CD14-positive monocyte (primary cell): ENCODE measurements at regions of chr10 and their contacts with region 1.

Region 1: GRCh38 chr10:114024876-114025610 is 18.6 kb upstream of the ADRB1 start:
- DNase-seq: peak; percentile 84 to 97 (median 94)
- H3K4me3 ChIP-seq: peak overlapping the region in 2 of 3 experiments; percentile 31 to 63
- H3K4me3 Mint-ChIP-seq: peak overlapping the region; percentile 69 to 83
- H3K27ac ChIP-seq: peak overlapping the region; percentile 63 to 67
- H3K27ac Mint-ChIP-seq: peak overlapping the region; percentile 80 to 97 (median 94)
- H3K4me1 ChIP-seq: peaks cover 47 to 71% of the 10 kb centered on the region in 2 donors
- H3K4me1 Mint-ChIP-seq: peaks cover 73% of the 10 kb centered on the region
- H3K27me3 ChIP-seq: no peaks in the 10 kb centered on the region
- H3K27me3 Mint-ChIP-seq: peaks cover 0 to 5% (median 4%) of the 10 kb centered on the region in 3 donors
- CTCF ChIP-seq: no peak

Region 2: GRCh38 chr10:113993489-113993991 is 31.5 kb before region 1 on chr10:
- intact Hi-C with region 1: loop called in 1 of 2 experiments (anchors 5 kb)
- DNase-seq: peak in 2 of 3 donors; percentile 31 to 32
- H3K4me3 ChIP-seq: peak overlapping the region in 1 of 3 experiments; percentile 60
- H3K4me3 Mint-ChIP-seq: peak overlapping the region; percentile 27 to 75
- H3K27ac ChIP-seq: peak overlapping the region in 1 of 2 donors; percentile 3
- H3K27ac Mint-ChIP-seq: peak overlapping the region in 4 of 7 donors; percentile 18 to 72 (median 52)
- H3K4me1 ChIP-seq: peaks cover 45 to 67% of the 10 kb centered on the region in 2 donors
- H3K4me1 Mint-ChIP-seq: peaks cover 73% of the 10 kb centered on the region
- H3K27me3 ChIP-seq: no peaks in the 10 kb centered on the region
- H3K27me3 Mint-ChIP-seq: peaks cover 4 to 8% (median 6%) of the 10 kb centered on the region in 3 donors
- CTCF ChIP-seq: no peak

Region 3: GRCh38 chr10:114064151-114065048 is 39.4 kb after region 1 on chr10:
- intact Hi-C with region 1: loop called in 1 of 2 experiments (anchors 5 kb)
- DNase-seq: no peak
- H3K4me3 ChIP-seq: no peak overlapping the region
- H3K4me3 Mint-ChIP-seq: peak overlapping the region in 1 of 2 donors; percentile 54
- H3K27ac ChIP-seq: no peak overlapping the region
- H3K27ac Mint-ChIP-seq: peak overlapping the region in 1 of 7 donors; percentile 12
- H3K4me1 ChIP-seq: peaks cover 50 to 65% of the 10 kb centered on the region in 2 donors
- H3K4me1 Mint-ChIP-seq: peaks cover 63% of the 10 kb centered on the region
- H3K27me3 ChIP-seq: peaks cover 0 to 2% of the 10 kb centered on the region in 2 donors
- H3K27me3 Mint-ChIP-seq: peaks cover 4 to 8% (median 6%) of the 10 kb centered on the region in 3 donors
- CTCF ChIP-seq: no peak

Region 4: GRCh38 chr10:114077815-114078219 is 52.8 kb after region 1 on chr10:
- intact Hi-C with region 1: no loop called
- DNase-seq: no peak
- H3K4me3 ChIP-seq: no peak overlapping the region
- H3K4me3 Mint-ChIP-seq: no peak overlapping the region
- H3K27ac ChIP-seq: no peak overlapping the region
- H3K27ac Mint-ChIP-seq: no peak overlapping the region
- H3K4me1 ChIP-seq: peaks cover 17 to 21% of the 10 kb centered on the region in 2 donors
- H3K4me1 Mint-ChIP-seq: peaks cover 34% of the 10 kb centered on the region
- H3K27me3 ChIP-seq: no peaks in the 10 kb centered on the region
- H3K27me3 Mint-ChIP-seq: peaks cover 0 to 2% (median 0%) of the 10 kb centered on the region in 3 donors
- CTCF ChIP-seq: no peak